ENCODE measurements at regions of chr7 and their contacts with region 1.

Region 1: DNA sequence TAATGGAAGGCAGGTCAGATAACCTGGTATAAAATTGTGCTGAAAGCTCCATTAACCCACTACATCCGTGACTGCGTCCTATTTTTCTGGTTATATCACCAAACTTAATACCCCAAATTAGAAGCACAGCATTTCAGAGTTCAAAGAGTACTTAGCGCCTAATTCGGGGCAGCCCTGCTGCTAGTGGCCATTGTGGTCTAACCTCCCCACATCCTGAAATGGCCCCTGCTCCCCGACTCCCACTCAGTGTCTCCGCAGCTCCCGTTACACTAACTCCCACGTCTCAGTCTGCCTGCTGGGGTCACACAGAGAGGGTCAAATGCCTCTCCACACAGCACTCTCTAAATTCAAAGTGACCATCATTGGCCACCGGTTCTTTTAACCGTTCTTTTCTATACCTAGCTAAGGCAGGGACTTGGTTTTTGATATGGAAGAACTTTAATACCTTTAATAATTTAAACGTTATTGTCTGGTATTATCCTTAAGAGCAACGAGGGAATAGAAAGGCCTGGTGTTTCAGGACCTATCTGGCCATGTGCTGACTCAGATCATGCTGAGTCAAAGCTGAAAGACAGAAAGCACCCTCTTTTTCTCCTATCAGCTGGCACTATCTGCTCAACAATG is 117.1 kb downstream of the KMT2E start:
- DNase-seq: peak; percentile 35
- H3K4me3 Mint-ChIP-seq: no peak overlapping the region
- H3K27ac Mint-ChIP-seq: no peak overlapping the region
- H3K4me1 Mint-ChIP-seq: peaks cover 30% of the 10 kb centered on the region
- H3K27me3 Mint-ChIP-seq: no peaks in the 10 kb centered on the region

Region 2: DNA sequence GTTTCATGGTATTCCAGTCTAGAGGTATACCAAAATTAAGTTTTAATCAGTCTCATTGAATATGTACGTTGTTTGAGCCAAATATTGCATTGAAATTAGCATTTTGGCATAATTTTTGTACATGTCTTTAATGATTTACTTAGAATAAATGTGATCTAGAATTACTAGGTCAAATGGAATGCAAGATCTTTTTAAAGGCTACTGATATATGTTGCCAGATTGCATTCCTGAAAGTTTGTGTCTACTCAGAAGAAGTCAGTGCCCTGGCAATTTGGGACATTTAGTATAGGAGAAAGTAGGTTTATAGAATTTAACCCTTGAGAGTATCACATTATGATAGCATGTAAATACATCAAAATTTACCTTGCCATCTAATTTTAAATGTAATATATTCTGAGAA is 84.7 kb before region 1 on chr7:
- CTCF ChIA-PET with region 1: no interaction called
- POLR2A ChIA-PET with region 1: no interaction called
- intact Hi-C with region 1: no loop called
- DNase-seq: no peak
- H3K4me3 Mint-ChIP-seq: no peak overlapping the region
- H3K27ac Mint-ChIP-seq: no peak overlapping the region
- H3K4me1 Mint-ChIP-seq: peaks cover 43% of the 10 kb centered on the region
- H3K27me3 Mint-ChIP-seq: no peaks in the 10 kb centered on the region

Region 3: DNA sequence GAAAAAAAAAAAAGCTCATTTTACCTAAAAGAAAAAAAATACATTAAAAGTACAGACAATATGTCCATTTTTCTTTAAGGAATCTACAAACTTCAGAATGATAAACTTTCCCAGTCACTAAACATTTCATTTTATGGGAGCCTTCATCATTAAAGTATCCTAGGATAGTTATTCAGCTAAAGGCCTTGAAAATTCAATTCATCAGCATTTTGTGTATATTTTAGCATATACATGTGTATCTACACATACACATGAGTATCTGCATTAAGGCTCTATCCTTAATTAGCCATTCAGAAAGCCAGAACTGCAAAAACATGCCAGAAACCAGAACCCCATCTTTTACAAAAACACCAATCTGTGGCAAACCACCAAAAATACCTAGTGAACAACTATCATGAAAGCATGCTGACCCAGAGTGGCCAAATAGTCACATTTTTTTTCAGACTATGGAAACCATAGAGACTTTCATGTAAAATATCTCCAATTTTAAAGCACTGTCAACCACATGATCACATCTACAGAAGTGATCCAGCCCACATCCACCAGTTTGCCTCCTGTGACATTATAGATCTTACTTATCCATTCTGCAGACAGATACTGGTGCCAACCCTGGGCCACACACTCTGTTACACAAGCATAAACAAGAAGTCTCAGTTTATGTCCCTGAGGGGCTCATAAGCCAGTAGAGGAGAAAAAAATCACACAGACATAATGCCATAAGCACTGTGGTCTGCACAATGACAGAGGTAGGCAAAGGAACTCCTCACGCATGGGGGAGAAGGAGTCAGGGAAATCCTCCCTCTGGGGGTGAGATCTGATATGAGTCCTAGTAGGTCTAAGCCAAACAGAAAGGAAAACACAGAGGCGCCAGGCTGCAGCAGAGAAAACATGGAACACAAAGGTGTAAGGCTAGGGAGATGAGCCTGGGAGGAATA is 178.4 kb after region 1 on chr7:
- CTCF ChIA-PET with region 1: no interaction called
- POLR2A ChIA-PET with region 1: no interaction called
- intact Hi-C with region 1: loop called (anchors 5 kb)
- DNase-seq: peak; percentile 31
- H3K4me3 Mint-ChIP-seq: no peak overlapping the region
- H3K27ac Mint-ChIP-seq: peak overlapping the region; percentile 4
- H3K4me1 Mint-ChIP-seq: peaks cover 64% of the 10 kb centered on the region
- H3K27me3 Mint-ChIP-seq: no peaks in the 10 kb centered on the region

Region 4: GRCh38 chr7:105336009-105336408 is 204.9 kb after region 1 on chr7:
- CTCF ChIA-PET with region 1: no interaction called
- POLR2A ChIA-PET with region 1: no interaction called
- intact Hi-C with region 1: loop called (anchors 5 kb)
- DNase-seq: no peak
- H3K4me3 Mint-ChIP-seq: no peak overlapping the region
- H3K27ac Mint-ChIP-seq: no peak overlapping the region
- H3K4me1 Mint-ChIP-seq: peaks cover 19% of the 10 kb centered on the region
- H3K27me3 Mint-ChIP-seq: no peaks in the 10 kb centered on the region

Measured in activated CD4-positive, alpha-beta memory T cell treated with anti-CD3 and anti-CD28 coated beads for 36 hours (primary cell).